AG04450 (cell line): ENCODE measurements at regions of chr19 and their contacts with region 1.

Region 1: GRCh38 chr19:1780272-1780958 is 27.1 kb downstream of the ONECUT3 start:
- DNase-seq: no peak
- H3K4me3 ChIP-seq: no peak overlapping the region
- H3K27ac ChIP-seq: no peak overlapping the region
- H3K27me3 ChIP-seq: peaks cover 56% of the 10 kb centered on the region
- CTCF ChIP-seq: peak; percentile 45

Region 2: GRCh38 chr19:1767464-1767933 is 12.9 kb before region 1 on chr19:
- CTCF ChIA-PET with region 1: interaction called, 14 read pairs
- POLR2A ChIA-PET with region 1: no interaction called
- DNase-seq: no peak
- H3K4me3 ChIP-seq: no peak overlapping the region
- H3K27ac ChIP-seq: no peak overlapping the region
- H3K27me3 ChIP-seq: peaks cover 65% of the 10 kb centered on the region
- CTCF ChIP-seq: peak; percentile 93

Region 3: DNA sequence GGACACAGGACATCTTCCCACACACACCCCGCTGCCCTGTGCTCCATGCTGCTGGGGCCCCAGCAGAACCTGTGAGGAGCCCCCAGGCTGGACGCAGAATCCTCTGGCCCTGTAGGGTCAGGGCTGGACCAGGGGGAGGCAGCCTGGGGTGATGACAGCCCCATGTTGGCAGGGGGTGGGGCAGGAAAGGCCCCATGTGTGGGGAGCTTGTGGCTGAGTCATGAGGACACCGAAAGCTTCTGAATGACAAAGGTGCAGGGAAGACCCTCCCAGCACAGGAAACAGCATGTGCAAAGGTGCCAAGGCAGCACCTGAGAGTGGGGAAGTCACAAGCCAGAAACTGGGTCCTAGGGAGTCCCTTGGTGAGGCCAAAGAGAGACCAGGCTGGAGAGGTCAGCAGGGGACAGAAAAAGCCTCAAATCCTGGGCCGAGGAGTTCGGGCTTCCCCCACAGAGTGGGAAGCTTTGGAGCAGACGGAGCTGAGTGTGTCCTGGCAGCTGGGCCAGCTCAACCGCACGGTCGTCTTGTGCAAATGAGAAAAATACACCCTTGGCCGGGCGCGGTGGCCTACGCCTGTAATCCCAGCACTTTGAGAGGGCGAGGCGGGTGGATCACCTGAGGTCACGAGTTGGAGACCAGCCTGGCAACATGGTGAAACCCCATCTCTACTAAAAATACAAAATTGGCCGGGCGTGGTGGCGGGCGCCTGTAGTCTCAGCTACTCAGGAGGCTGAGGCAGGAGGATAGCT is 14.2 kb after region 1 on chr19:
- CTCF ChIA-PET with region 1: interaction called, 10 read pairs
- POLR2A ChIA-PET with region 1: interaction called, 7 read pairs
- DNase-seq: no peak
- H3K4me3 ChIP-seq: no peak overlapping the region
- H3K27ac ChIP-seq: no peak overlapping the region
- H3K27me3 ChIP-seq: peaks cover 2% of the 10 kb centered on the region
- CTCF ChIP-seq: no peak

Region 4: GRCh38 chr19:1929021-1929742 is 148.8 kb after region 1 on chr19:
- CTCF ChIA-PET with region 1: no interaction called
- POLR2A ChIA-PET with region 1: no interaction called
- DNase-seq: no peak
- H3K4me3 ChIP-seq: peak overlapping the region; percentile 54
- H3K27ac ChIP-seq: no peak overlapping the region
- H3K27me3 ChIP-seq: peaks cover 2% of the 10 kb centered on the region
- CTCF ChIP-seq: peak; percentile 89